ENCODE measurements at regions of chr16 and their contacts with region 1.

Region 1: DNA sequence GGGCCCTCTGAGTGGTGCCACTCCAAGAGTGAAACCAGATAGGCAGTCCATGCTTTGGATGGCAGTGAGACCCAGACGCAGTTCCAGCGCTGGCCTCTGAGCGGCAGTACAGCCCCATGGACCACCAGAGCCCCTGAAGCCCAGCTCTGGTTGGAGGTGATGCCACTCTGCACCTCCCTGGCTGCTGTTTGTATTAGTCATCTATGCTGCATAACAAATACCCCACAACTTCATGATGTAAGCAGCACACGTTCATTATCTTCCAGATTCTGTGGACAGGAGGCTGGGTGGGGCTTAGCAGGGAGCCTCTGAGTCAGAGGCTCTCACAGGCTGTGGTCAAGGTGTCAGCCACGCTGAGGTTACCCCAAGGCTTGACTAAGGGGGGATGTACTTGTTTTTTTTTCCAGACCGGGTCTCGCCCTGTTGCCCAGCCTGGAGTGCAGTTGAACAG is 5.1 kb upstream of the NME4 start:
- DNase-seq: peak; percentile 86
- H3K4me3 Mint-ChIP-seq: no peak overlapping the region
- H3K27ac Mint-ChIP-seq: peak overlapping the region; percentile 46
- H3K4me1 Mint-ChIP-seq: peaks cover 17% of the 10 kb centered on the region
- H3K27me3 Mint-ChIP-seq: no peaks in the 10 kb centered on the region

Region 2: GRCh38 chr16:483341-484075 is 91.6 kb after region 1 on chr16:
- CTCF ChIA-PET with region 1: interaction called, 12 read pairs
- intact Hi-C with region 1: no loop called
- DNase-seq: no peak
- H3K4me3 Mint-ChIP-seq: no peak overlapping the region
- H3K27ac Mint-ChIP-seq: no peak overlapping the region
- H3K4me1 Mint-ChIP-seq: no peaks in the 10 kb centered on the region
- H3K27me3 Mint-ChIP-seq: no peaks in the 10 kb centered on the region

Region 3: DNA sequence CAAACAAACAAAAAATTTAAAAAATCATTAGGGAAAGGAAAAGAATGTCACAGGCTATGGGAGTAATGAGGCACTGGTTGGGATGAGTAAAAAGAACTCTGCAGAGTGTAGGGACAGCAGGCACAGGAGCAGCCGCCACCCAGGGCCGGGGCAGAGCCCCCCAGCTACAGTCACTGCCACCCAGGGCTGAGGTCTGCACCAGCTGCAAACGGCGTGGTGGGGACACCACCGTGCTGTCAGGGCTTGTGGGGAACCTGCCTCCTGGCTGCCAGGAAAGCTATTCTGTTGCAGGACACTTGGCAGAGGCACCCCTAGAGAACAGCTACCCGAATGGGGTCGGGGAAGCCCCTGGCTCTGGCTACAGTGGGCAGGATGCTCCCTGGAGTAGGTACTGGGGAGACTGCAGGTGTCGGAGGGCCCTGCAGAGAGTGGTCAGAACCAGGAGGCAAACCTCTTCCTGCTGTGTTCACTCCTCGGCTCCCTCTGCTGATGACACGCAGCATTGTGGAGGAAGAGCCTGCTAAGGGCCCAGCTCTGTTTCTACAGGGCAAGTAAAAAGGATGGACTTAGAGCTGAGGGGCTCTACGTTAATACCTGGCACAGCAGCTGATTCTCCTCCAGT is 103.3 kb after region 1 on chr16:
- CTCF ChIA-PET with region 1: no interaction called
- intact Hi-C with region 1: loop called (anchors 5 kb)
- DNase-seq: peak; percentile 30
- H3K4me3 Mint-ChIP-seq: no peak overlapping the region
- H3K27ac Mint-ChIP-seq: no peak overlapping the region
- H3K4me1 Mint-ChIP-seq: no peaks in the 10 kb centered on the region
- H3K27me3 Mint-ChIP-seq: no peaks in the 10 kb centered on the region

Region 4: DNA sequence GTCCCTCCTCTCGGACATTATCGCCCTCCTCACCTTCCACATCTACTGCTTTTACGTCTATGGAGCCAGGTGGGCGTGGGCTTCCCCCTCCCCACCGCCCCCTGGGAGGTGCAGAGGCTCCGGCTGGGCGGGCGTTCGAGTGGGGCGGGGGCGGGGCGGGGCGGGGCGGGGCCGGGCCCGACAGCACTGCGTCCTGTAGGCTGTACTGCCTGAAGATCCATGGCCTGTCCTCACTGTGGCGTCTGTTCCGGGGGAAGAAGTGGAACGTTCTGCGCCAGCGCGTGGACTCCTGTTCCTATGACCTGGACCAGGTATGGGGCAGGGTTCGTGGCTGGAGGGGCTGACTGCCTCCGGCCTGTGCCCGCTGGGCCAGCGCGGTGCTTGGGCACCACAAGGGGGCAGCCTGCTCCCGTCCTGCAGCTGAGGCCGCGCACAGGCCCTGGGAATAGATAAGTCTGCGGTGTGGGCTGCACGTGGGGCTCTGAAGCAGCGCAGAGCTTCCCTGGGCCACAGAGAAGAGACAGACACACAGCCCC is 187.0 kb after region 1 on chr16:
- CTCF ChIA-PET with region 1: no interaction called
- intact Hi-C with region 1: loop called (anchors 5 kb)
- DNase-seq: peak; percentile 74
- H3K4me3 Mint-ChIP-seq: no peak overlapping the region
- H3K27ac Mint-ChIP-seq: no peak overlapping the region
- H3K4me1 Mint-ChIP-seq: peaks cover 3% of the 10 kb centered on the region
- H3K27me3 Mint-ChIP-seq: no peaks in the 10 kb centered on the region

Region 5: DNA sequence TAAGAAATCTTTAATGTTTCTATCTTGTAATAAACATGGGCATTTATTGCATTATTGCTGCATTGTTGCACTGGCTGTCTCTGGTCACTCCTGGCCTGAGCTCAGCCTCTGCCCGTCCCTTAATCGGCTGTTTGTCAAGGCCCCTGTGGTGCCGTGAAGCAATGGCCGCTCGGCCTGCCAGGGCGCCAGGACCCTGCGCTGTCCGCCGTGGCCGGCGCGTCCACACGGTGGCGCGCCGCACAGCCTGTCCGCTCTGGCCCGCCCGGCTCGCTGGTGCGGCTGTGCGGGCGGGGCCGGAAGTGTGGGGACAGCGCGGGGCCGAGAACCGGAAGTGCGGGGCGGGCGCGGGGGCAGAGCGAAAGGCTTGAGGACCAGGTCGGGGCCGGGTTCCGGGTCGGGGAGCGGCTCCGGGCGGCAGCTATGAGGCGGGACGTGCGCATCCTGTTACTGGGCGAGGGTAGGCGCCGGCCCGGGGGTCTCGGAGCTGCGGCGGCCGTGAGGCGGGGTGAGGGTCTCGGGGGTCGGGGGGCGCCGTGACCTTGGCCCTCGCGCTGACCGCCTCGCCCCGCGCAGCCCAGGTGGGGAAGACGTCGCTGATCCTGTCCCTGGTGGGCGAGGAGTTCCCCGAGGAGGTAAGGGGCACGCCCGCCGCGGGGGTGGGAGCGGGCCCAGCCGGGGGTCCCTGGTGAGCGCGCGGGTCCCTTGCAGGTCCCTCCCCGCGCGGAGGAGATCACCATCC is 276.0 kb after region 1 on chr16 and contains the start of gene RHOT2:
- CTCF ChIA-PET with region 1: no interaction called
- intact Hi-C with region 1: loop called (anchors 5 kb)
- DNase-seq: peak; percentile 94
- H3K4me3 Mint-ChIP-seq: peak within 1 kb of the TSS; percentile 78
- H3K27ac Mint-ChIP-seq: peak within 1 kb of the TSS; percentile 83
- H3K4me1 Mint-ChIP-seq: peaks cover 11% of the 10 kb centered on the region
- H3K27me3 Mint-ChIP-seq: no peaks in the 10 kb centered on the region
- total RNA-seq, gene RHOT2: 81.9 to 84.0 TPM

Measured in activated naive CD4-positive, alpha-beta T cell treated with anti-CD3 and anti-CD28 coated beads for 36 hours (primary cell).